T-cell (primary cell): ENCODE measurements at regions of chr10 and their contacts with region 1.

Region 1: GRCh38 chr10:30392564-30392990 is 41.4 kb upstream of the MAP3K8 start:
- DNase-seq: peak; percentile 29 to 84 (median 67)
- ATAC-seq: peak; percentile 98 to 100 (median 98)
- H3K4me3 ChIP-seq: no peak overlapping the region
- H3K4me3 Mint-ChIP-seq: no peak overlapping the region
- H3K27ac ChIP-seq: no peak overlapping the region
- H3K27ac Mint-ChIP-seq: no peak overlapping the region
- H3K4me1 ChIP-seq: peaks cover 0 to 6% of the 10 kb centered on the region in 2 experiments
- H3K4me1 Mint-ChIP-seq: peaks cover 3 to 5% (median 4%) of the 10 kb centered on the region in 3 donors
- H3K27me3 ChIP-seq: peaks cover 0 to 10% of the 10 kb centered on the region in 2 experiments
- H3K27me3 Mint-ChIP-seq: peaks cover 6 to 12% of the 10 kb centered on the region in 2 donors

Region 2: GRCh38 chr10:30368065-30368718 is 24.4 kb before region 1 on chr10:
- CTCF ChIA-PET with region 1: no interaction called
- POLR2A ChIA-PET with region 1: no interaction called
- DNase-seq: no peak
- ATAC-seq: no peak
- H3K4me3 ChIP-seq: no peak overlapping the region
- H3K4me3 Mint-ChIP-seq: no peak overlapping the region
- H3K27ac ChIP-seq: no peak overlapping the region
- H3K27ac Mint-ChIP-seq: no peak overlapping the region
- H3K4me1 ChIP-seq: peaks cover 6% of the 10 kb centered on the region in 2 experiments
- H3K4me1 Mint-ChIP-seq: peaks cover 7 to 24% (median 19%) of the 10 kb centered on the region in 3 donors
- H3K27me3 ChIP-seq: peaks cover 0 to 4% of the 10 kb centered on the region in 2 experiments
- H3K27me3 Mint-ChIP-seq: peaks cover 0 to 2% of the 10 kb centered on the region in 2 donors

Region 3: DNA sequence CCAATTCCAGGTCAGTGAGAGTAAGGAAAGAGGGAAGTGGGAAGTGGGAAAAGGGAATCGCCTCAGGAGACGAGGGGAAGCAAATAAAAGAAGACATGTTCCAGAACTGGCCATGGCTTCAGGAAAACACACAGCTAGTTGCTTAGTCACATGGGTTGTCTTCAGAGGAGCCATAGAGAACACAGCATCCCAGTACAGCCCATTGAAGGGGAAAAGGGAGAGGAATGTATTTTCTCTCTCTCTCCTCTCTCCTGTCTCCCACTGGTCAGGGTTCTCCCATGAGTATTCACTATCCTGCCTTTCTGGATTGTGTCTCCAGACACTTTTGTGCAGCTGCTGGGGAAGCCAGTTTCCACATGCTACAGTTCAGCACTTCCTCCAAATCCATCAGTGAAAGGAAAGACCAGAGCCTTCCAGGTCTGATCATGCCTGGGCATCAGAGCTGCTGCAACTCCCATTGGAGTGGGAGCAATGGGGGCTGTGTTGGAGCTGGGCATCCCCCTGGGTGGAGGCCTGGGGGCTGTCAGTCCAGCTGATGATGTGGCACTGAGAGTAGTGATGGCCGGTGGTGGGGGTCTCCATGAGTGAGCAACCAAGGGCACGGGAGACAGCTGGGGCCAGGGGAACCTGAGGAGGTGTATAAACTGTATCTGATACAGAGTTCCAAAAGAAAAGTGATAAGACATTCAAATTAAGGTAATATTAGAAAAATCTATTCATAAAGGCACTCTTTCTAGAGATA is 80.0 kb after region 1 on chr10:
- CTCF ChIA-PET with region 1: no interaction called
- POLR2A ChIA-PET with region 1: no interaction called
- DNase-seq: no peak
- ATAC-seq: no peak
- H3K4me3 ChIP-seq: no peak overlapping the region
- H3K4me3 Mint-ChIP-seq: no peak overlapping the region
- H3K27ac ChIP-seq: no peak overlapping the region
- H3K27ac Mint-ChIP-seq: no peak overlapping the region
- H3K4me1 ChIP-seq: peaks cover 0 to 13% of the 10 kb centered on the region in 2 experiments
- H3K4me1 Mint-ChIP-seq: peaks cover 11 to 21% (median 17%) of the 10 kb centered on the region in 3 donors
- H3K27me3 ChIP-seq: peaks cover 0 to 3% of the 10 kb centered on the region in 2 experiments
- H3K27me3 Mint-ChIP-seq: peaks cover 0 to 2% of the 10 kb centered on the region in 2 donors

Region 4: DNA sequence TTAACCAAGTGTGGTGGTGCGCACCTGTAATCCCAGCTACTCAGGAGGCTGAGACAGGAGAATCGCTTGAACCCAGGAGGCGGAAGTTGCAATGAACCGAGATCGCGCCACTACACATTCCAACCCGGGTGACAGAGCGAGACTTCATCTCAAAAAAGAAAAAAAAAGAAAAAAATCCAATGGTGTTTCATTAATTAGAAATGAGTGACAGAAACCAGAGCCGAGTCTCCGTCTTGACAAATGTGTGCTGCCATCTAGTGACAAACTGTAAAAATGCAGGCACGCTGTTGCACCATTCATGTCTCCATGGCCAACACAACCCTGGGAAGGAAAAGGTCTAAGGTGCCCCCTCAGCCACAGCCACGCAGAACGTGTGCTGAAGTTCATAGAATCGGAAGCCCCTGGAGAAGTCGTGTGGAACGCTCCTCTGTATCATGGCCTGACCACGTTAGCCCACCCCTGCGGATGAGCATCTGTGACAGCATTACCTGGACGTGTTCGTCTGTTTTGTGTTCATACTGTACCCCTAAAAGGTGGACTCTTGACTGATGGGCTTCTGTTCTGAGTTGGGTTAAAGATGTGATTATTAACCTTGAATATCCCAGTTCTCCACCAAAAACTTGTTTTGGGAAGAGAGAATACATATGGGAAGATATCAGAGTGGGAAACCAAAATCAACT is 142.0 kb after region 1 on chr10:
- CTCF ChIA-PET with region 1: interaction called, 4 to 10 read pairs
- POLR2A ChIA-PET with region 1: no interaction called
- DNase-seq: peak; percentile 37 to 89 (median 63)
- ATAC-seq: peak; percentile 35 to 62 (median 54)
- H3K4me3 ChIP-seq: no peak overlapping the region
- H3K4me3 Mint-ChIP-seq: no peak overlapping the region
- H3K27ac ChIP-seq: no peak overlapping the region
- H3K27ac Mint-ChIP-seq: peak overlapping the region in 1 of 2 donors; percentile 6
- H3K4me1 ChIP-seq: peaks cover 0 to 36% of the 10 kb centered on the region in 2 experiments
- H3K4me1 Mint-ChIP-seq: peaks cover 14 to 37% (median 23%) of the 10 kb centered on the region in 3 donors
- H3K27me3 ChIP-seq: no peaks in the 10 kb centered on the region
- H3K27me3 Mint-ChIP-seq: peaks cover 0 to 3% of the 10 kb centered on the region in 2 donors

Region 5: GRCh38 chr10:30591249-30591670 is 198.7 kb after region 1 on chr10:
- CTCF ChIA-PET with region 1: interaction called, 8 to 44 read pairs
- POLR2A ChIA-PET with region 1: no interaction called
- DNase-seq: peak in 31 of 35 experiments; percentile 1 to 80 (median 16)
- ATAC-seq: peak; percentile 50 to 67 (median 62)
- H3K4me3 ChIP-seq: no peak overlapping the region
- H3K4me3 Mint-ChIP-seq: no peak overlapping the region
- H3K27ac ChIP-seq: no peak overlapping the region
- H3K27ac Mint-ChIP-seq: no peak overlapping the region
- H3K4me1 ChIP-seq: no peaks in the 10 kb centered on the region
- H3K4me1 Mint-ChIP-seq: peaks cover 0 to 9% (median 2%) of the 10 kb centered on the region in 3 donors
- H3K27me3 ChIP-seq: peaks cover 0 to 25% of the 10 kb centered on the region in 2 experiments
- H3K27me3 Mint-ChIP-seq: peaks cover 11 to 16% of the 10 kb centered on the region in 2 donors